Posterior vena cava (tissue), 2 donors: ENCODE measurements at regions of chr13 and their contacts with region 1.

Region 1: GRCh38 chr13:41274881-41275280 is 11.5 kb upstream of the MTRF1 start:
- DNase-seq: no peak

Region 2: GRCh38 chr13:41295973-41296372 is 21.1 kb after region 1 on chr13:
- intact Hi-C with region 1: loop called in 1 of 2 experiments (anchors 1 kb)
- DNase-seq: no peak